Cardiac septum (tissue), 1 donor: ENCODE measurements at regions of chr9 and their contacts with region 1.

Region 1: DNA sequence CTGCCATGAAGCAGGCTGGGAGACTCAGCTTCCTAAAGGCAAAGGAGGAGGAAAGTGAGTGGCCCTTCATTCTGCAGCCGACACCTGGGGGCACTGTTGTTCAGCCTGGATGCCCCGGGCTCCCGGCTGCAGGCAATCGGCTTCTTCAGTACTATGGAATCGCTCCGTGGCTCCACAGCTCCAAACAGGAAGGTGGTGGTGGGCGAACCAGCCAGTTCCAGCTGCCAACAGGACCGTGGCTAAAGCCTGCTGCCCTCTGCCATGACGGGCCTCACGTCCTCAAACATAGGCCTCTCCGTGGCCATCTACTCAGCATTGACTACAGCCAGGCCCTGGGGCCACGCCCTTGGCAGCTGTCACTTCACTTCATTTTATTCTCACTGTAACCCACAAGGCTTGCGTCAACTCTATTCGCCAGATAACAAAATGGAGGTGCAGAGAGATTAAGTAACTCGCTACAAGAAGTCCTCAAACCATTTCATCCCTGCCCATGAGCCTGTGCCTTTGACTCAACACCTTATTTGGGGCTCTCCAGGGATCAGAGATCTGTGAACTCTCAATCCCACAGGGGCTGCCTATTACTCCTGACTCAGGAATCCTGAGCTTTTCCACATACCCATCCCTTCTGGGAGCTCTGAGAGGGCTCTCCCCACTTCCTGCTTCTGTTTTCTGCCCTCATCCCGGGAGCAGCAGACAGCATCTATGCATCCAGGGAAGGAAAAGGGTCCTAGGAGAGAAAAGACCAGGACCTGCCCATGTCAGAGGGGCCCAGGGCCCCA is 38.0 kb downstream of the PAX5 start:
- DNase-seq: no peak

Region 2: GRCh38 chr9:37262410-37262809 is 266.3 kb after region 1 on chr9:
- intact Hi-C with region 1: loop called (anchors 5 kb)
- DNase-seq: no peak